Activated CD4-positive, alpha-beta memory T cell treated with anti-CD3 and anti-CD28 coated beads, Interleukin-2, amount 10 ng/mL, durations not matched to agents 7 days and 5 days (primary cell): ENCODE measurements at regions of chr9 and their contacts with region 1.

Region 1: DNA sequence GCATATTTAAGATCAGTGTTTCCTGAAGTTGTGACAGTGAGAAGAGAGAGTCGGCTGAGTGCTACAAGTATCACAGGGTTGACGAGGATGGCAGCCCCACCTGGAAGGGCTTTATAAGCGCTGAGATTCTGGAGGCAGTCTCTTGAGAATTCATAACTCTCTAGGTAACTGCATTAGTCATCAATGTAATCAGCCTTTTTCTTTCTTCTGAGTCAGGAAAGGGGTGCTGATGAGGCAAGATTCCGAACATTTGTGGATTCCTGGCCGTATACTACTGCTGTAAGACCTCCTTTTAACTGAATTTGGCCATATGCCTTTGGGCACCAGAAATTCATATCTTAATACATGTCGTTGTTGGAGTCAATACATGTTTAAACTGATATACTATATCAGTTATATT is 6.6 kb upstream of the RNF20 start:
- DNase-seq: no peak
- H3K4me3 Mint-ChIP-seq: no peak overlapping the region
- H3K27ac Mint-ChIP-seq: no peak overlapping the region
- H3K4me1 Mint-ChIP-seq: peaks cover 6% of the 10 kb centered on the region
- H3K27me3 Mint-ChIP-seq: peaks cover 11% of the 10 kb centered on the region

Region 2: DNA sequence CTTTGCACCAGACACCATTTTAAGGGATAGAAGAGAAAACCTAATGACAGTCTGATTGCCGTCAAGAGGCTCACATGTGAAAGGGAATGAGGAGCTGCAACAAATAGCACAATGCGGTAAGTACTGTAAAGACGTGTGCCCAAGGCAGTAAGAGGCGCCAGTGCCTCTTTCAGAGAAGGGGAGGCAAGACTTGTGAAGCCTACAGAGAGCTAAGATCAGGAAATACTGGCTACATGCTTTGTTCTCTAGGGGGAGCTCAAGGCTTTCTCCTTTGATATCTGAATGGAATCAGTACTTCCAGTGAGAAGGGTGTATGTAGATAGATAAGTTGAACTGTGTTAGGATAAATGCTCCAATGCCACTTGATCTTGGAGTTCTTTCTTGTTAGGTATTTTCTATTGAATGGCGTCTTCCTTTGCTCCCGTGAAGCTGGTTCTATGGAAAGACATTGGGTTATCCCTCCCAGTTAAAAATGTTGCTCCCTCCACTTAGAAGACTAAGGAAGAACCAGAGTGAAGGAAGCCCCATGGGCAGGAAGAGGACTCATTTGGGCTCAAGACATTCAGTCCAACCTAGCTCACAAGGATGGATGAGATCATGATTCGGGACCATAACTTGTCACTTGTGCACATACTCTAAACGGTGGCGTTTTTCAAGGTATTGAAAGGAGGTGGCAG is 68.0 kb before region 1 on chr9:
- CTCF ChIA-PET with region 1: interaction called, 24 read pairs
- POLR2A ChIA-PET with region 1: no interaction called
- DNase-seq: peak; percentile 17
- H3K4me3 Mint-ChIP-seq: no peak overlapping the region
- H3K27ac Mint-ChIP-seq: no peak overlapping the region
- H3K4me1 Mint-ChIP-seq: no peaks in the 10 kb centered on the region
- H3K27me3 Mint-ChIP-seq: peaks cover 6% of the 10 kb centered on the region